ENCODE measurements at regions of chr3 and their contacts with region 1.

Region 1: GRCh38 chr3:136075218-136075808 is 109.8 kb downstream of the PPP2R3A start:
- DNase-seq: peak; percentile 92
- H3K4me3 Mint-ChIP-seq: no peak overlapping the region
- H3K27ac Mint-ChIP-seq: no peak overlapping the region
- H3K4me1 Mint-ChIP-seq: peaks cover 2% of the 10 kb centered on the region
- H3K27me3 Mint-ChIP-seq: peaks cover 10% of the 10 kb centered on the region

Region 2: DNA sequence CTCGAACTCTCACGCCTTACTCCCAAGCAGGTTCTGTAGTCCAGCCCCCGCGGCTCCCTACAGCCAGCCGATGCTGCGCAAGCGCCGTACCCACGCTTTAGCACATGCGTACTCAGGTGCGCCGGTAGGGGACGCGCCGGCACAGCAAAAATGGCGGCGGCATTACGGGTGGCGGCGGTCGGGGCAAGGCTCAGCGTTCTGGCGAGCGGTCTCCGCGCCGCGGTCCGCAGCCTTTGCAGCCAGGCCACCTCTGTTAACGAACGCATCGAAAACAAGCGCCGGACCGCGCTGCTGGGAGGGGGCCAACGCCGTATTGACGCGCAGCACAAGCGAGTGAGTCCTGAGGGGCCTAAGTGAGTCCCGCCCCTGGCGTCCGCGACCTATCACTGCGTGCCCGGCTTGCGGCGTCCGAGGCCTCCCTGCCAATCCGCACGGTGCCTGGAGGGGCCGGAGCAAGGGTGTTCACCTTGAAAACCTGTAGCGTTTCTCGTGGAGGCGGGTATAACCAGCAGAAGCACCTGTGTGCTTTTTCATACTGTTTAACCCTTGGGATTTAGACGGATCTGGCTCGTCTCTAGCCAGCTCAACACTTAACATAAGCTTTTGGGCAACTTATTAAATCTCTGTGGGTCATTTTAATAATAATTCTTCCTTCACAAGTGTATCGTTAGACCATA is 175.1 kb after region 1 on chr3 and contains the start of gene PCCB:
- intact Hi-C with region 1: loop called (anchors 1 kb)
- DNase-seq: peak; percentile 97
- H3K4me3 Mint-ChIP-seq: peak within 1 kb of the TSS; percentile 91
- H3K27ac Mint-ChIP-seq: peak within 1 kb of the TSS; percentile 95
- H3K4me1 Mint-ChIP-seq: peaks cover 16% of the 10 kb centered on the region
- H3K27me3 Mint-ChIP-seq: no peaks in the 10 kb centered on the region
- total RNA-seq, gene PCCB: 45.4 and 55.9 TPM in 2 replicates

Region 3: DNA sequence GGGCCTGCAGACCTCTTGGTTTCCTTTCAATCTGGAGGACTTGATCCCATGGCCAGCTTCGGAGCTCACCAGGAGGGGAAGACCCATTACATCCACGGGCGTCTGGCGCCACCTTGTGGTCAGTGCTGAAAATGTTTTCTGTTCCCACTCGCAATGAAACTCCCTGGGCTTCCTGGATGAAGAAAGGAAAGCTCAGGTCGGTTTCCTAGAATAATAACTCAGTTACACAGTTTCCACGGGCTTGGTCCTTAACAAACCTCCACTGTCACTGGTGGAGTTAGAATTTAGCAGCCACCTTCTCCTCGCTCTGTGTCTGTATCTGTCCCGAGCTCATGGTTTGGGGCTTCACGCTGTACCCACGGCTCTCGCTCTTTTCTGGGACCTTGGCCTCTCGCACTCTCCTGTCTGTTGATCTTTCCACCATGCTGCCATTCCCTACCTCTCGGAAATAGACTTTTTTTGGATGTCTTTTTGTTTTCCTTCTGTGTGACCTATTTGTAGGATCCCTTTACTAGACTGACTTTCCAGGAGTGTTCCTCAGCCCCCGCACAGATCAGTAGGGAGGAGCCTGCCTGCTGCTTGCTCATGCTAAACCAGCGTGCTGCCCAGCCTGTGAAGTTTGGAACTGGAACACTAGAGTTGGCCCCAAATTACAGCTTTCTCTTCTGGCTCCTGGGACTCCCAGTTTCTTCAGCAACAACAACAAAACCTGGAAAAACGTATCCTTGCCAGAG is 938.8 kb after region 1 on chr3:
- intact Hi-C with region 1: loop called (anchors 1 kb)
- DNase-seq: peak; percentile 95
- H3K4me3 Mint-ChIP-seq: peak overlapping the region; percentile 77
- H3K27ac Mint-ChIP-seq: no peak overlapping the region
- H3K4me1 Mint-ChIP-seq: peaks cover 10% of the 10 kb centered on the region
- H3K27me3 Mint-ChIP-seq: peaks cover 3% of the 10 kb centered on the region

Region 4: DNA sequence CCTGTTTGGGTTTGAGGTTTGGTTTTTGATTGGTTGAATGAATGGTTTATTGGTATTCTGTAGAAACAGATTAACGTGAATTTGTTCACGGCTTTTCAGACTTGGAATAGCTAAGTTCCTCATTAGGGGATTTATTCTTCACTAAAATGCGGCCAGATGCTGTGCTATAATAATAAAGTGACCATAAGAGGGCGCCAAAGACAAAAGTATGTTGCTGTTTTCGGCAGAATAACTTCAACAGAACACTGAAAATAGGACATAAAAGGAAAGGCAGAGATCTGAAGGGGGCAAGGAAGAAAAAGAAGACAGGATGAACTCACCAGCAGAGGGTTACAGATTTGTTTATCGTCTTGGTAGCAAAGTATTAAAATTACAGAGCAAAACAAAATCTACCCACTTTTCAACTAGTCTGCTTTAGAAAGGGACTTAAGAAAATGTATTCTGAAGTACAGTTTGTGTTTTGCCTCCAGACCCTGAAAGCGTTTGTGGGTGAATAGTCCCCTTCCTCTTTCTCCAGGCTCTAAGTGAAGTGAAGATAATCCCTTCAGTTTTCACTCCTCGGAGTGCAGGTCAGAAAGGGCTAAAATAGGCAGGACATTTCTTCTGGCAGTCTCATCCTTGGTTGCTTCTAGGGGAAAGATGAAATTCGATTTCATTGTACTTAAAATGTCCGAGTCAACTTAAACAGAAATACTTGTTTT is 1030.1 kb after region 1 on chr3:
- intact Hi-C with region 1: loop called (anchors 5 kb)
- DNase-seq: peak; percentile 71
- H3K4me3 Mint-ChIP-seq: no peak overlapping the region
- H3K27ac Mint-ChIP-seq: no peak overlapping the region
- H3K4me1 Mint-ChIP-seq: no peaks in the 10 kb centered on the region
- H3K27me3 Mint-ChIP-seq: peaks cover 10% of the 10 kb centered on the region

Region 5: DNA sequence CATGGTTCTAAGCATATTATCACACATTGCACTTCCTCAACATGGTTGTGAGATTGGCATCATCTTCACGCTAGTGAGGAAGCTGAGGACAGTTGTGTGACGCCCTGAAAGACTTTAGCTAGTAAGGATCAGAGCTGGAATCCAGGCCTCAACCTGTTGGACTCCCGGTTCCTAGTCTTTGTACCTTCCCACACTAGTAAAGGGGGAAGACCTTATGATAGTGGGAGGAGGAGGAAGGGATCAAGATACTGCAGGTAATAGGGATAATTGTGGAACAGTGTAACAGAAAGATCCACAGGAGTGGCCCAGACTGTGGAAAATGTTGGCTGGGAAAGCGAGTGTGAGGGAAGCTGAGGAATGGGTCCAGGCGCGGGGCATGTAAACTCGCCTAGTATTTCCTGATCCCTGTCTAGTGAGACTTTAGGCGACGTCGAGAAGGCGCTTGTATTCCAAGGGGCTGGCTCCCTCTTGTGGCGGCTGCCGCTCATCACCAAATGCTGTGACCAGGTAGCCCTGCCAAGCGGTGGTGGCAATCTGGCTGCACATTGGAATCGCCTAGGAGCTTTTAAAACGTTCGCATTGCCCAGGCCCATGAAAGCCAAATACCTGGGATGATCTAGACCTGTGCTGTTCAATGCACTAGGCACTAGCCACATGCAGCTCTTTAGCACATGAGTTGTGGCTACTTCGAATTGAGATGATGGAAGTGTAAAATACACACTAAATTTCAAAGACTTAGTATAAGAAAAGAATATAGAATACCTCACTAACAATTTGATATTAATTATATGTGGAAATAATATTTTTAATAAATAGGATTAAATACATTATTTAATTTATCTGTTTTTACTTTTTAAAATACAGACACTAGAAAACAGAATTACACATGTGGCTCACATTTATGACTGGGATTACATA is 1895.9 kb after region 1 on chr3:
- intact Hi-C with region 1: loop called (anchors 10 kb)
- DNase-seq: peak; percentile 84
- H3K4me3 Mint-ChIP-seq: no peak overlapping the region
- H3K27ac Mint-ChIP-seq: no peak overlapping the region
- H3K4me1 Mint-ChIP-seq: peaks cover 3% of the 10 kb centered on the region
- H3K27me3 Mint-ChIP-seq: peaks cover 8% of the 10 kb centered on the region

Measured in activated CD4-positive, alpha-beta T cell treated with anti-CD3 and anti-CD28 coated beads, Interleukin-2, amount 10 ng/mL, durations not matched to agents 24 days and 14 days (primary cell).